Activated T-helper 2 cell treated with anti-CD3 and anti-CD28 coated beads, Interferon-gamma antibody, Interleukin-2, Interleukin-4, amounts not matched to agents 10 μg/mL and 5 μg/mL and 100 μg/mL, durations not matched to agents 14 hours and 24 hours and 36 hours (primary cell): ENCODE measurements at regions of chr2 and their contacts with region 1.

Region 1: DNA sequence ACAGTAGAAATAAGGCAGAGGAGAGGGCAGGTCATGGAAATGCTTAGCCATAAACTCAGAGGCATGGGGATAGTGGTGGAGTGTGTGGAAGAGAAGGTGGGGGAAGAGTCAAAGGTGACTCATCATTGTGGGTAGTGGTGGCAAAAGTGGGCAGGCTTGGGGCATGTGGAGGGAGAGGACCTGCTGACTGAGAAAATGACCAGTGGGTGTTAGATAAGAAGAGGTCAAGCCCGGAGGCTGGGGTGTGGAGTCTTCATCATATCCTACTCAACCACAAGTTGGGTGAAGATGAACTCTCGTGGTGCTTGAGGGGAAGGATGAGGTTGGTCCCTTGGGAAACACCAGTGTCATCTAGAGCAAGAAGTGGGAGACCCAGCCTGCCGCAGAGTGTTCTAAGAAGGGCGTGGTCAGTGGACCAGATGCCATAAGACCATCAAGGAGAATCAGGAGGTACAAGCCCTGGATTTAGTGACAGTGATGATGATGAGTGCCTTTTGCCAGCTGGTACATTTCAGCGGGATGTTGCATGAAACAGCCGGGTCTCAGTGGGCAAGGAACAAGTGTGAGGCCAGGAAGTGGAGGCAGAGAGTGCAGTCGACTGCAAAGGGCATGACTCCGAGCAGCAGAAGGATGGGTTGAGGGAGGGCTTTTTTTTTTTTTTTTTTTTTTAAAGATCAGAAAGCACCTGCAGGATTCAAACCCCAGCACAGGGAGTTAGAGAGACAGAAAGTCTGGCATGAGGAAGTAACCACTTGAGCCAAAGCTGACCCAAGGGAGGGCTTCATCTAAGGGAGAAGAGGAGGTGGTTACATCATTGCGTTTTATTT is 122.6 kb upstream of the SPRED2 start:
- DNase-seq: no peak
- H3K4me3 Mint-ChIP-seq: no peak overlapping the region
- H3K27ac Mint-ChIP-seq: no peak overlapping the region
- H3K4me1 Mint-ChIP-seq: peaks cover 16% of the 10 kb centered on the region
- H3K27me3 Mint-ChIP-seq: peaks cover 27% of the 10 kb centered on the region

Region 2: DNA sequence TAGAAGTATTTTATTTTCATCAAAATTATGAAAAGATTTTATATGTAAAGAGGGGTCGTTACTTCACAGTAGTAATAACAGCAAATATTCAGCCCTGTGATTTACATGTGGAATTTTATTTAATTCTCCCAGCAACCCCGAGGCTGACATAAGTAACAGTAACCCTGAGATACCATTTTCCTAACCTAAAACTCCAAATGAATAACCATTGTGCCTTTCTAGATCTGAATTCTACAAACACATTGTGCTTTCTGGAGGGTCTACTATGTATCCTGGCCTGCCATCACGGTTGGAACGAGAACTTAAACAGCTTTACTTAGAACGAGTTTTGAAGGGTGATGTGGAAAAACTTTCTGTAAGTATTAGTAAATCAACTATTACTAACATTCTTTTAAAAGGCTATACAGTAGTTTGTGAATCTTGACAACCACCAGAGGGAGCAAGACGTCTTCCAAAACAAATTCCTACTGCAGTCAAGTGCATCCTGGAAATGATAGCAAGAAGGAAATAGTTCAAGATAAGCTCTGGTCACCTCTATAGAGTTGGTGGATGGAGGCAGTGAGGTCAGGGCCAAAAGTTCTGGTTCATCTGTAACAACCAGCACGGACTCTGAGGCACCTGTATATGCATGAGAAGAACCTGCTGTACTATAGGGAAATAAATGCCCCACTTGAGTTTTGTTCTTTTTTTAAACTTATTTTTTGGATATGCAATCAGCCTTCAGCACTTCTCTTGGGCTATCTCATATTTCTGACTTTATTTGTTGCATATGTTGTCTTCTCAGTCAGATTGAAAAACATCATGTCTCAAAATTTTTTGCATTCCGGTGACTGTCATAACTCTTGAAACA is 289.9 kb before region 1 on chr2:
- intact Hi-C with region 1: loop called (anchors 1 kb)
- DNase-seq: no peak
- H3K4me3 Mint-ChIP-seq: no peak overlapping the region
- H3K27ac Mint-ChIP-seq: no peak overlapping the region
- H3K4me1 Mint-ChIP-seq: peaks cover 13% of the 10 kb centered on the region
- H3K27me3 Mint-ChIP-seq: no peaks in the 10 kb centered on the region

Region 3: GRCh38 chr2:65320042-65320725 is 234.8 kb before region 1 on chr2:
- intact Hi-C with region 1: loop called (anchors 1 kb)
- DNase-seq: no peak
- H3K4me3 Mint-ChIP-seq: no peak overlapping the region
- H3K27ac Mint-ChIP-seq: peak overlapping the region; percentile 64
- H3K4me1 Mint-ChIP-seq: peaks cover 21% of the 10 kb centered on the region
- H3K27me3 Mint-ChIP-seq: peaks cover 2% of the 10 kb centered on the region

Region 4: GRCh38 chr2:65357095-65357958 is 197.7 kb before region 1 on chr2:
- intact Hi-C with region 1: loop called (anchors 5 kb)
- DNase-seq: no peak
- H3K4me3 Mint-ChIP-seq: no peak overlapping the region
- H3K27ac Mint-ChIP-seq: no peak overlapping the region
- H3K4me1 Mint-ChIP-seq: peaks cover 59% of the 10 kb centered on the region
- H3K27me3 Mint-ChIP-seq: peaks cover 16% of the 10 kb centered on the region

Region 5: GRCh38 chr2:65491381-65491909 is 63.5 kb before region 1 on chr2:
- intact Hi-C with region 1: no loop called
- DNase-seq: no peak
- H3K4me3 Mint-ChIP-seq: no peak overlapping the region
- H3K27ac Mint-ChIP-seq: no peak overlapping the region
- H3K4me1 Mint-ChIP-seq: no peaks in the 10 kb centered on the region
- H3K27me3 Mint-ChIP-seq: peaks cover 1% of the 10 kb centered on the region